ENCODE measurements at regions of chr7 and their contacts with region 1.

Region 1: DNA sequence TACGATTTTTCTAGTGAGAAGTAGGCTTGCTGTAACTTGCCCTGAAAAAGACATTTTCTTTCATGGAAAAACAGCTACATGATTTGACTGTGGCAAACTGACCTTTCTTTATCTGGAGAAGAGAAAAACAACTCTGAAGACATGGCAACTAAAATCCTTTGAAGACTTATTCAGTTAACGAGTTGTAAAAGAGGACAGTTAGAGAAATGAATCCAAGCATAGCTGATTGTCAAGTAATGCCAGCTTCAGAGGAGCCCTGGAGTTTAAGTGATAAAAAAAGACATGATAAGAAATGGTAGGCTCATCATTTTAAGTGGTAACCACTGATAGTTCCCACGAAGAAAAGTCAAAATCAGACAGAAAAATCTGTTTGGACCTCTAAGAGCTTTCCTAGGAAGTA is 19.6 kb downstream of the TMEM229A start:
- DNase-seq: no peak
- H3K4me3 ChIP-seq: no peak overlapping the region
- H3K27ac ChIP-seq: no peak overlapping the region
- H3K4me1 ChIP-seq: no peaks in the 10 kb centered on the region
- H3K27me3 ChIP-seq: no peaks in the 10 kb centered on the region
- CTCF ChIP-seq: no peak
- POLR2A ChIP-seq: no peak

Region 2: DNA sequence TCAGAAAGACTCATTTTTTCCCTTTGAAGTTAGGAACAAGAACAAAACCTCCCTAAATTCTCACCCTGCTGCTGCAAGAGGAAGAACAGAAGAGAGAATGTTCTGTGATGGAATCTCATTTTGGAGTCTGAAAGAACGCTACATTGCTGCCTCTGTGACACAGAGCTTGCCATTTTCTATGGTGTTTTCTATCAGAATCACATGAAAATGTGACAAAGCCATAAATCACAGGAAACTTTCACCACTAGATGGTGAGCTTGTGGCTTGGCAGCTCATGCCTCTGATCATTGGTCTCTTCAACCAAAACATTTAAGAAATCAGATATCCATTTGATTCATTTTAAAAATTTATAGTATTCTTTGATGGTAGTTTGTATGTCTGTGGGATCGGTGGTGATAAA is 1210.0 kb before region 1 on chr7:
- intact Hi-C with region 1: loop called (anchors 5 kb)
- DNase-seq: no peak
- H3K4me3 ChIP-seq: no peak overlapping the region
- H3K27ac ChIP-seq: no peak overlapping the region
- H3K4me1 ChIP-seq: peaks cover 5% of the 10 kb centered on the region
- H3K27me3 ChIP-seq: no peaks in the 10 kb centered on the region
- CTCF ChIP-seq: no peak
- POLR2A ChIP-seq: no peak

Region 3: DNA sequence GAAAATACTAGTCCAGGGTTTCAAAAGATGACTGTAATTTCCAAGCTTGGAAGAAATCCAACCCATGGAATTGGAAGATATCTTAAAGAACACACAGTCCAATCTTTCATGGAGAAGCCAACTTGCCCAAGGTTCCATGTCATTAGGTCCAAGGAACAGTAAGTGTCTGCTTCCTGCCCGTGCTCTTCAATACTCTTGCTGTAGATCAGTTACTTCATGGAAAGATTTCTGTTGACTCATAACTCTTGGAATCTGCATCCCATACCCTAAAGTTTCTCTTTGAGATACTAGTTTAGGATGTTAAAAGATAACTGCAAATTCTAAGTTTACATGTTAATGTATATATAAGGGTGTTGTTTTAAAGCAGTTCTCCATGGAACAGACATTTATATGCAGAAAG is 685.6 kb before region 1 on chr7:
- intact Hi-C with region 1: no loop called
- DNase-seq: no peak
- H3K4me3 ChIP-seq: no peak overlapping the region
- H3K27ac ChIP-seq: no peak overlapping the region
- H3K4me1 ChIP-seq: no peaks in the 10 kb centered on the region
- H3K27me3 ChIP-seq: no peaks in the 10 kb centered on the region
- CTCF ChIP-seq: no peak
- POLR2A ChIP-seq: no peak

Region 4: GRCh38 chr7:123979876-123980275 is 33.4 kb before region 1 on chr7:
- intact Hi-C with region 1: no loop called
- DNase-seq: no peak
- H3K4me3 ChIP-seq: no peak overlapping the region
- H3K27ac ChIP-seq: no peak overlapping the region
- H3K4me1 ChIP-seq: no peaks in the 10 kb centered on the region
- H3K27me3 ChIP-seq: no peaks in the 10 kb centered on the region
- CTCF ChIP-seq: no peak
- POLR2A ChIP-seq: no peak

Region 5: GRCh38 chr7:125636320-125636962 is 1623.1 kb after region 1 on chr7:
- intact Hi-C with region 1: no loop called
- DNase-seq: no peak
- H3K4me3 ChIP-seq: no peak overlapping the region
- H3K27ac ChIP-seq: no peak overlapping the region
- H3K4me1 ChIP-seq: no peaks in the 10 kb centered on the region
- H3K27me3 ChIP-seq: no peaks in the 10 kb centered on the region
- CTCF ChIP-seq: no peak
- POLR2A ChIP-seq: no peak